ENCODE measurements at regions of chr19 and their contacts with region 1.

Region 1: GRCh38 chr19:8240274-8241229 is 31.4 kb downstream of the CERS4 start:
- DNase-seq: peak; percentile 82
- H3K4me3 ChIP-seq: no peak overlapping the region
- H3K27ac ChIP-seq: peak overlapping the region; percentile 21 to 65 (median 34)
- H3K4me1 ChIP-seq: peaks cover 10 to 14% (median 11%) of the 10 kb centered on the region in 4 donors
- H3K27me3 ChIP-seq: no peaks in the 10 kb centered on the region
- CTCF ChIP-seq: no peak
- EP300 ChIP-seq: no peak
- POLR2A ChIP-seq: no peak

Region 2: DNA sequence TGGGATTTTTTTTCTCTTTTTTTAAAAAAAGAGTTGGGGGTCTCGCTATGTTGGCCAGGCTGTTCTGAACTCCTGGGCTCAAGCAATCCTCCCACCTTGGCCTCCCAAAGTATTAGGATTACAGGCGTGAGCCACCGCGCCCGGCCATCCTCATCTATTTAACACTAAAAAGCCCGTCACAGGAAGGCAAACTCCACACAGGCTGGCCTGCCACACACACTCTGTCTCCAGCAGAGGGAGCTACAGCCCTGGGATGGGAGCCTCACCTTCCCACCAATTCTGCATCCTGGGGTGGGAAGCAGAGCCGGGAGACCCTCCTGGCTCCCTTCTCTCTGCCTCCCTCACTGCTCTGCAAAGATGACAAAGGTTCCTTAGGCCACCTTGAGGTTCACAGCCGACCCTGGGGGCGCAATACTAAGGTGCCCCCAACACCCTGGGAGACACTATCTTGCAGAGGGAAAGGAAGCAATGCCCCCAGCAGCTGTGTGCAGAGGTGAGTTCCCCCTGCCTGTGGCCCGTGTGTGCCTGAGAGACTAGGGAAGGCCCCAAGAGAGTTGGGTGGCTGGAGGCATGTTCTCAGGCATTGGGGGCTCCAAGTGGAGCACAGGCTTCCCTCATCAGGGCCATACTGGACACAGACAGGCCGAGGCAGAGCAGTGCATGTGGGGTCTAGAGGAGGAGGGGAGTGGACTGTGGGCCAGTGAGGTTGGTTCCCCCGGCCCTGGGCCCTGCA is 269.7 kb before region 1 on chr19:
- in situ Hi-C with region 1: loop called in 1 of 4 experiments (anchors 25 kb)
- intact Hi-C with region 1: no loop called
- DNase-seq: peak; percentile 18
- H3K4me3 ChIP-seq: no peak overlapping the region
- H3K27ac ChIP-seq: no peak overlapping the region
- H3K4me1 ChIP-seq: no peaks in the 10 kb centered on the region
- H3K27me3 ChIP-seq: no peaks in the 10 kb centered on the region
- CTCF ChIP-seq: peak; percentile 39 to 66 (median 55)
- EP300 ChIP-seq: no peak
- POLR2A ChIP-seq: no peak

Region 3: DNA sequence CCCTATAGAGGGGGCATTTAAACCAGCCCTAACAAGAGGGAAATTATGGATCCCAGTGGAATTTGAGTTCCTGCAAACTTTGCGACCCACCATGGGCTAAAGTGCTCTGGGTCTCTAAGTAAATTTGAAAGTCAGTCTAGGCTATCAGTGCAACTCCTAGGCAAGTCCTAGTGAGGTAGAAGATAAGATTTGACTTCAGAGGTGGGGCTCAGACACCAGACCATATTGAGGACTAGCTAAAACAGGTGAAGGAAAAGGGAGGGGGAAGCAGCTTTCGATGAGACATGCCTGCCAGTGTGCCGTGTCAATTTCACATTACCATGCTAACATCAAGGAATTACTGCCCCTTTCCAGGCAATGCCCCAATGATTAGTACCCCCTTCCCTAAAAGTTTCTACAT is 29.2 kb after region 1 on chr19:
- in situ Hi-C with region 1: no loop called
- intact Hi-C with region 1: no loop called
- DNase-seq: no peak
- H3K4me3 ChIP-seq: no peak overlapping the region
- H3K27ac ChIP-seq: peak overlapping the region; percentile 57 to 74 (median 59)
- H3K4me1 ChIP-seq: peaks cover 0 to 11% (median 3%) of the 10 kb centered on the region in 4 donors
- H3K27me3 ChIP-seq: peaks cover 12% of the 10 kb centered on the region
- CTCF ChIP-seq: no peak
- EP300 ChIP-seq: no peak
- POLR2A ChIP-seq: no peak